ENCODE measurements at regions of chr4 and their contacts with region 1.

Region 1: DNA sequence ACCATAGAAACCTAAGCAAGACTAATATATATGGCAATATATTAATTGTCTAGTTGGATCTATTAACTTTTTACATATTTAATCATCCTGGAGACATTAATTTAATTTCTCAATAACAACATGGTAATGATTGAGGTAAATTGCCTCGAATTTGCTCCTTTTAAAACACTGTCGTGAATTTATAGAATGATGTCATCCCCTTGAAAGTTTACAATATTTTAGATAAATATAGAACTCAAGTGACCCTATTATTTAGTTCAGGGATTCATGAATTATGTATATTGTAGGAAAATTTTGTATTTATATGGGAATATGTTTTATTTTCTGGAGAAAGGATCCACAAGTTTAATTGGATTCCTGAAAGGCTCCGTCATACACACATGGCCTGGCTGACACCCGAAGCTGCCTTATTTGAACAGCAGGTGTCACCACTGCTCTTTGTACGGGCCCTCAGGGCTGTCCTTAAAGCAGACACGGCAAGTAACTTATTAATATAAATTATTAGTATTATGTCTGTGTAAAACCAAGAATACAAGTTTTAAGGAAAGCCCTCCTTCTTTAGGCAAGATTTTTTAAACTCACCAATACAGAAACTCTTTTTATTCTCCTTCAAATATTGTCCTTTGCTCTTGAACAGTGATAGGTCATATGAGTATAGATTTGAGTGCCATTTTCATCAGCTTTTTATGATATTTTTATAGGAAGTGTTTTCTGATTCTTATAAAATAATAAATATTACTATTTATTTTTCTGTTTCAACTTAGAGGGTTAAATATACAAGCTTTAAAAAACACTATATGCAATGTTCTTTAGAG is 1.9 kb upstream of the PLRG1 start:
- DNase-seq: peak; percentile 35 to 84 (median 70)
- ATAC-seq: peak; percentile 45
- H3K4me3 ChIP-seq: no peak overlapping the region
- H3K4me3 Mint-ChIP-seq: no peak overlapping the region
- H3K27ac ChIP-seq: no peak overlapping the region
- H3K27ac Mint-ChIP-seq: no peak overlapping the region
- H3K4me1 ChIP-seq: peaks cover 16% of the 10 kb centered on the region
- H3K4me1 Mint-ChIP-seq: peaks cover 29% of the 10 kb centered on the region
- H3K27me3 ChIP-seq: no peaks in the 10 kb centered on the region
- H3K27me3 Mint-ChIP-seq: no peaks in the 10 kb centered on the region
- CTCF ChIP-seq: peak; percentile 96

Region 2: GRCh38 chr4:154569028-154569427 is 16.9 kb after region 1 on chr4:
- CTCF ChIA-PET with region 1: no interaction called
- POLR2A ChIA-PET with region 1: no interaction called
- intact Hi-C with region 1: no loop called
- DNase-seq: no peak
- ATAC-seq: no peak
- H3K4me3 ChIP-seq: no peak overlapping the region
- H3K4me3 Mint-ChIP-seq: no peak overlapping the region
- H3K27ac ChIP-seq: no peak overlapping the region
- H3K27ac Mint-ChIP-seq: no peak overlapping the region
- H3K4me1 ChIP-seq: no peaks in the 10 kb centered on the region
- H3K4me1 Mint-ChIP-seq: no peaks in the 10 kb centered on the region
- H3K27me3 ChIP-seq: no peaks in the 10 kb centered on the region
- H3K27me3 Mint-ChIP-seq: peaks cover 6% of the 10 kb centered on the region
- CTCF ChIP-seq: no peak

Region 3: DNA sequence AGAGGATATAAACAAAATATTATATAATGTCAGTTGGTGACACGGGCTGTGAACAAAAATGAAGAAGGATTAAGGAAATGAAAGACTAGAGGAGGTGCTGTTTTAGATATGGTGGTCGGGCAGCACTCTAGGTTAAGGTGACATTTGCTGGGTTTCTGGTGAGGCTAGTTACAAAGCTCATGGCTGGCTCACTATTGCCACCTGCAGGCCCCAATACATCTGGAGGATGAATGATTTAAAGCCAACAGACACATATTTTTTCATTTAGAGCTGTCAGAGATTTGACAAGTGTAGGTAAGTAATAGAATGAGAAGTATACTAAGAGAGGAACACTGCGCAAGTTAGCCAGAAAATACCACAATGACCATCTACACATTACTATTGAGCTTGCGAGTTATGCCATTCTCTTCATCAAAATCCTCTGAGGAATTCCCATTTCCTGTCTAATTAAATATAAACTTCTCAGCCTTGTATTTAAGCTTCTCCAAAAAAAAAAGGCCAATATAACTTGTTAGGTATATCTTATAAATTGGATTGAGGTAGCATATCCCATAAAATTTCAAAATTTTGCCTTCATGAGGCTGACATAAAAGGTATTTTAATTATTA is 66.7 kb after region 1 on chr4:
- CTCF ChIA-PET with region 1: interaction called, 20 read pairs
- POLR2A ChIA-PET with region 1: no interaction called
- intact Hi-C with region 1: loop called (anchors 1 kb)
- DNase-seq: peak in 7 of 9 experiments; percentile 4 to 60 (median 37)
- ATAC-seq: peak; percentile 71
- H3K4me3 ChIP-seq: no peak overlapping the region
- H3K4me3 Mint-ChIP-seq: no peak overlapping the region
- H3K27ac ChIP-seq: no peak overlapping the region
- H3K27ac Mint-ChIP-seq: no peak overlapping the region
- H3K4me1 ChIP-seq: no peaks in the 10 kb centered on the region
- H3K4me1 Mint-ChIP-seq: peaks cover 2% of the 10 kb centered on the region
- H3K27me3 ChIP-seq: no peaks in the 10 kb centered on the region
- H3K27me3 Mint-ChIP-seq: peaks cover 9% of the 10 kb centered on the region
- CTCF ChIP-seq: peak; percentile 30

Region 4: DNA sequence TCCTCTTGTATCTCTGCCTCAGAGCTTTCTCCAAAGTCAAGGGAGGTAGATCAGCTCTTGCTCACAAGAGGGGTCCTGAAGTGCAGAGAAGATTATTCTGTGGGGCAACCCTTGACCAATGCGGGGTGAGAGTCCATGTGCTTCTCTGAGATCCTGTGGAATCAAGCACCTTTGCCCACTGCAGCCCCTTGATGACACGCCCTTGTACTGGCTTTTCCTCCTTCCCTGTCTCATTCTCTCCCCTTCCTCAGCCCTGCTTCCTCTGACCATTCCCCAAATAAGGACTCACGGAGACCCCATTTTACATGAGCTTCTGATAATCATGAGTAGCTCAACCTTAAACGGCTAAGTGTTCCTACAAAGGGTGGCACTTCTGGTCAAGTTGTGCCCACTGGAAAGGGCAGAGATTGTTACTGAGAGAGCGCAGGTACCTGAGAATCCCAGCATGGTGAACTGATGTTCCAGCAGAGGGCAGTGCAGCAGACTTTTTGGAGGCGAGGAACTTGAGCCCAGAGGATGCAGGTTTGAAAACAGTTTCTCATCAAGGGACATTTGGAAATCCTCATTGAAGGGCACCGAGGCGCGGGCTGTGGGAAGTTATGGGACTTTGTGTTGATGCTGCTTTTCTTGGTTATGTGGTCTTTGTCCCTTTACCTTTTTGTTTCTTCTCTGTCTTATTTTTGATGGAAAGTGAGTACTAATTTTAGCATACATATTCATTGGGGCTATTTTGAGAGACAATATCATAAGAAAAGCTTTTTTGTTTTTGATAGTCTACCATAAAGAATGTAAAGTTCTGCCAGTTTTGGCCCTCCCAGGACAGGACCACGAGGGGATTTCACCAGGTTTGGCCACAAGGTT is 430.3 kb after region 1 on chr4:
- CTCF ChIA-PET with region 1: no interaction called
- POLR2A ChIA-PET with region 1: no interaction called
- intact Hi-C with region 1: loop called in 1 of 2 experiments (anchors 5 kb)
- DNase-seq: peak in 5 of 9 experiments; percentile 15 to 48 (median 21)
- ATAC-seq: no peak
- H3K4me3 ChIP-seq: no peak overlapping the region
- H3K4me3 Mint-ChIP-seq: no peak overlapping the region
- H3K27ac ChIP-seq: no peak overlapping the region
- H3K27ac Mint-ChIP-seq: no peak overlapping the region
- H3K4me1 ChIP-seq: no peaks in the 10 kb centered on the region
- H3K4me1 Mint-ChIP-seq: no peaks in the 10 kb centered on the region
- H3K27me3 ChIP-seq: no peaks in the 10 kb centered on the region
- H3K27me3 Mint-ChIP-seq: no peaks in the 10 kb centered on the region
- CTCF ChIP-seq: peak; percentile 28

Region 5: GRCh38 chr4:155376387-155377268 is 824.5 kb after region 1 on chr4 and contains the start of gene MAP9:
- CTCF ChIA-PET with region 1: interaction called, 23 read pairs
- POLR2A ChIA-PET with region 1: interaction called, 11 read pairs
- intact Hi-C with region 1: loop called (anchors 1 kb)
- DNase-seq: peak; percentile 78 to 98 (median 89)
- ATAC-seq: peak; percentile 88
- H3K4me3 ChIP-seq: peak within 1 kb of the TSS; percentile 77 to 84
- H3K4me3 Mint-ChIP-seq: peak within 1 kb of the TSS; percentile 90
- H3K27ac ChIP-seq: peak within 1 kb of the TSS; percentile 86 to 88
- H3K27ac Mint-ChIP-seq: peak within 1 kb of the TSS; percentile 89
- H3K4me1 ChIP-seq: peaks cover 8% of the 10 kb centered on the region
- H3K4me1 Mint-ChIP-seq: peaks cover 22% of the 10 kb centered on the region
- H3K27me3 ChIP-seq: no peaks in the 10 kb centered on the region
- H3K27me3 Mint-ChIP-seq: no peaks in the 10 kb centered on the region
- CTCF ChIP-seq: no peak
- total RNA-seq, gene MAP9: 17.2 to 18.6 TPM

Region 6: GRCh38 chr4:155787113-155787710 is 1235.1 kb after region 1 on chr4:
- CTCF ChIA-PET with region 1: no interaction called
- POLR2A ChIA-PET with region 1: no interaction called
- intact Hi-C with region 1: loop called (anchors 5 kb)
- DNase-seq: peak in 2 of 9 experiments; percentile 14 to 54
- ATAC-seq: peak; percentile 51
- H3K4me3 ChIP-seq: no peak overlapping the region
- H3K4me3 Mint-ChIP-seq: no peak overlapping the region
- H3K27ac ChIP-seq: no peak overlapping the region
- H3K27ac Mint-ChIP-seq: no peak overlapping the region
- H3K4me1 ChIP-seq: no peaks in the 10 kb centered on the region
- H3K4me1 Mint-ChIP-seq: no peaks in the 10 kb centered on the region
- H3K27me3 ChIP-seq: no peaks in the 10 kb centered on the region
- H3K27me3 Mint-ChIP-seq: no peaks in the 10 kb centered on the region
- CTCF ChIP-seq: peak; percentile 42

Measured in CD8-positive, alpha-beta T cell (primary cell).